HCT116 (cell line): ENCODE measurements at regions of chr5 and their contacts with region 1.

Region 1: GRCh38 chr5:178058321-178059012 is 54.9 kb upstream of the N4BP3 start:
- DNase-seq: no peak
- ATAC-seq: no peak
- H3K4me3 ChIP-seq: no peak overlapping the region
- H3K27ac ChIP-seq: no peak overlapping the region
- H3K4me1 ChIP-seq: no peaks in the 10 kb centered on the region
- H3K27me3 ChIP-seq: no peaks in the 10 kb centered on the region
- CTCF ChIP-seq: no peak
- POLR2A ChIP-seq: no peak
- RAD21 ChIP-seq: no peak

Region 2: GRCh38 chr5:177982072-177982727 is 76.3 kb before region 1 on chr5:
- CTCF ChIA-PET with region 1: interaction called, 7 read pairs
- POLR2A ChIA-PET with region 1: no interaction called
- RAD21 ChIA-PET with region 1: no interaction called
- intact Hi-C with region 1: loop called (anchors 1 kb)
- DNase-seq: peak; percentile 19
- ATAC-seq: peak; percentile 89
- H3K4me3 ChIP-seq: no peak overlapping the region
- H3K27ac ChIP-seq: no peak overlapping the region
- H3K4me1 ChIP-seq: peaks cover 0 to 3% of the 10 kb centered on the region in 2 experiments; a peak in 1 of 4 replicates
- H3K27me3 ChIP-seq: no peaks in the 10 kb centered on the region
- CTCF ChIP-seq: peak; percentile 55 to 85 (median 65)
- POLR2A ChIP-seq: no peak
- RAD21 ChIP-seq: peak; percentile 84

Region 3: GRCh38 chr5:178153573-178154343 is 95.3 kb after region 1 on chr5 and contains the start of gene NHP2:
- CTCF ChIA-PET with region 1: no interaction called
- POLR2A ChIA-PET with region 1: no interaction called
- RAD21 ChIA-PET with region 1: no interaction called
- intact Hi-C with region 1: no loop called
- DNase-seq: peak; percentile 98
- ATAC-seq: peak; percentile 95
- H3K4me3 ChIP-seq: peak within 1 kb of the TSS; percentile 78 to 86
- H3K27ac ChIP-seq: peak within 1 kb of the TSS; percentile 51
- H3K4me1 ChIP-seq: peaks cover 14 to 21% of the 10 kb centered on the region in 2 experiments; a peak in 3 of 4 replicates
- H3K27me3 ChIP-seq: no peaks in the 10 kb centered on the region
- CTCF ChIP-seq: no peak
- POLR2A ChIP-seq: peak; percentile 26
- RAD21 ChIP-seq: no peak
- total RNA-seq, gene NHP2: 260 TPM